Activated CD8-positive, alpha-beta T cell treated with anti-CD3 and anti-CD28 coated beads for 36 hours (primary cell): ENCODE measurements at regions of chr10 and their contacts with region 1.

Region 1: GRCh38 chr10:31318854-31319601 is at the start of gene ZEB1:
- DNase-seq: peak; percentile 96
- ATAC-seq: peak; percentile 63
- H3K4me3 Mint-ChIP-seq: peak within 1 kb of the TSS; percentile 84
- H3K27ac Mint-ChIP-seq: peak within 1 kb of the TSS; percentile 96
- H3K4me1 Mint-ChIP-seq: peaks cover 41% of the 10 kb centered on the region
- H3K27me3 Mint-ChIP-seq: no peaks in the 10 kb centered on the region
- CTCF ChIP-seq: peak; percentile 30
- total RNA-seq, gene ZEB1: 28.4 to 29.7 TPM

Region 2: DNA sequence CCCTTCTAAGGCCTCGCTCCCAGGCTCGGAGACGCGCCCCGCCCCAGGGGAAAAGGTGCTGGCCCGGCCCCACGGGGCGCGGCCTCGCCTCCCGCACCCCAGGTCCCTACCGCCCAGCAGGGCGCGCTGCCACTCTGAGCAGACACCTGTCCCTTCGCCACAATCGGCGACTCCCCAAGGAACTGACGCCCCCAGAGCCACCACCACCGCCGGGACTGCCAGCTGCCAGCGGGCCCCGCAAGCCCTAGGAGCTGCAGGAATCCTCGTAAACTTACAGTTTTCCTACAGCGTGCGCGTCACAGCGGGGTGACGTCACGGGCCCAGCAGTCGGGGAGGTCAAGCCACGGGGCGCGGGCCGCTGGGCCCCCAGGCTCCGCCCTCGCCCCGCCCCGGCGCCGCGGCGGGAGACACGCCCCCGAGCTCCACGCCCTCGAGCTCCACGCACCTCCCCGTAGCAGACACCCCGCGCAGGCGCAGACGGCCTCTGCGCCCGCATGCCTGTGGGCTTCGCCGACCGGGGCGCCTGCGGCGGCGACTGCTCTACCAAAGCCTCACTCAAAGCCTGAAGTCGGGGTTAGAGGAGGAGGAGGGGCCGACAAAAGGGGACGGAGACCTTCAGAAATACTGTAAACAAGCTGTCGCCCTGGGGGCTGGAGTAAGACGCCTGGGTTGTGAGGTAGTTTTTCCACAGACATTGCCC is 287.3 kb before region 1 on chr10 and contains the start of gene ZNF438:
- CTCF ChIA-PET with region 1: interaction called, 3 read pairs
- POLR2A ChIA-PET with region 1: no interaction called
- intact Hi-C with region 1: loop called (anchors 5 kb)
- DNase-seq: peak; percentile 92
- ATAC-seq: peak; percentile 90
- H3K4me3 Mint-ChIP-seq: peak within 1 kb of the TSS; percentile 80
- H3K27ac Mint-ChIP-seq: peak within 1 kb of the TSS; percentile 97
- H3K4me1 Mint-ChIP-seq: peaks cover 5% of the 10 kb centered on the region
- H3K27me3 Mint-ChIP-seq: no peaks in the 10 kb centered on the region
- CTCF ChIP-seq: peak; percentile 55
- total RNA-seq, gene ZNF438: 3.0 to 3.9 TPM

Region 3: DNA sequence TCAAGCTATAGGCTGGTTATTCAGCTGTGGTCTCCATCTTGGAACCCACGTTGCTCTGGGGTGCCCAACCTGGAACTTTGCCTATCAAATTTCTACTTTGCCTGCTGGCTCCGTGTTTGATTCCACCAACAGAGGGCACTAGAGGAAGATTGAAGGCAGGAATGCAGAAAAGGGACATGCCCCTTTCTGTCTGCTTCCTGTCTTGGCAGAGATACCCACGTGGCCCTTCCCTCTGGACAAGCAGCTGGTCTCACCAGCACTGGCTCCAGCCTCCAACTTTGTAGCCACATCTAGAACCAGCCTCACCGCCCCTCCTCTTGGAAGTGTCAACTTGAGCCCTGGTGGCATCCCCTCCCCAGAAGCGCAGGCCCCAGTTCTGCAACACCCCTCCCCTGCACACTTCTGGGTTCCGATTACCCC is 235.3 kb before region 1 on chr10:
- CTCF ChIA-PET with region 1: interaction called, 3 read pairs
- POLR2A ChIA-PET with region 1: no interaction called
- intact Hi-C with region 1: loop called (anchors 10 kb)
- DNase-seq: peak; percentile 80
- ATAC-seq: peak; percentile 88
- H3K4me3 Mint-ChIP-seq: no peak overlapping the region
- H3K27ac Mint-ChIP-seq: peak overlapping the region; percentile 66
- H3K4me1 Mint-ChIP-seq: peaks cover 5% of the 10 kb centered on the region
- H3K27me3 Mint-ChIP-seq: no peaks in the 10 kb centered on the region
- CTCF ChIP-seq: peak; percentile 57

Region 4: GRCh38 chr10:31340343-31340742 is 21.3 kb after region 1 on chr10:
- CTCF ChIA-PET with region 1: interaction called, 5 read pairs
- POLR2A ChIA-PET with region 1: interaction called, 35 read pairs
- intact Hi-C with region 1: loop called (anchors 2 kb)
- DNase-seq: peak; percentile 38
- ATAC-seq: peak; percentile 9
- H3K4me3 Mint-ChIP-seq: no peak overlapping the region
- H3K27ac Mint-ChIP-seq: no peak overlapping the region
- H3K4me1 Mint-ChIP-seq: peaks cover 21% of the 10 kb centered on the region
- H3K27me3 Mint-ChIP-seq: no peaks in the 10 kb centered on the region
- CTCF ChIP-seq: no peak

Region 5: DNA sequence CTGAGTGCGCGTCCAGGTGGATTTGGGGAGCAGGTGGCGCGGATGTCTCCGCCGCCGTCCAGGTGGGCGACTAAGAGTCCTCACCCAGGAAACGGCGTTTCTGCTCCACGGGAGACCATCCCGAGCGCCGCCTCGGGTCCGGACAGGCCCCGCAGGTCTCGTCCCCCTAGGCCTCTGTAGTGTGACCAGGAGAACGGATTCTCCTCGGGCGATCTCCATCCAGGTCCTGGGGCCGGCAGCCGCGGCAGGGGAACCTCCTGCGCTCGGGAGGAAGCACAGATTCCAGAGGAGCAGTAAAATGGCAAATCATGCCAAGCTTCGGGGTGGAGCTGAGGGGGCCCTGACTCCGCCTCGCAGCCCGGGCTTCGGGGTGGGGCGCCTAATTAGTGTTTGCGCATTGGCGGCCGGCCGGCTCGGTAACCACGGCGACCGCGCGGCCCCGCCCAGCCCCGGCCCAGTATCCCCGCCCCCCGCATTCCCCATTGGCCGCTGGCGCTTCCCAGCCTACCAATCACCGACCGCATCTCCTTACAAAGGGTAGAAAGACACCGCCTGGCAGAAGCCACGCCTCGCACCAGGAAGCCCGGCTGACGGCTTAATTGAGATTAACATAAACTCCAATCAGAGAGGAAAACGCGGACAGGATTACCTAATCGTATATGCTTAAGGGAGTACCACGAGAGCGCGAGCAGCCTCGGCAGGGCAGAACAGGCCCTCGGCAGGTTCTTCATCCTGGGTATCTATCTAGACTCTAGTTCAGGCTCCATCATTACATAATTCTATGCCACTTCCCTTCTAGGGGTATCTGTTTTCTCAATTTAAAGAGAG is 441.0 kb after region 1 on chr10:
- CTCF ChIA-PET with region 1: no interaction called
- POLR2A ChIA-PET with region 1: no interaction called
- intact Hi-C with region 1: loop called (anchors 10 kb)
- DNase-seq: peak; percentile 96
- ATAC-seq: peak; percentile 94
- H3K4me3 Mint-ChIP-seq: peak overlapping the region; percentile 90
- H3K27ac Mint-ChIP-seq: peak overlapping the region; percentile 90
- H3K4me1 Mint-ChIP-seq: peaks cover 17% of the 10 kb centered on the region
- H3K27me3 Mint-ChIP-seq: no peaks in the 10 kb centered on the region
- CTCF ChIP-seq: no peak